ENCODE measurements at regions of chr2 and their contacts with region 1.

Region 1: DNA sequence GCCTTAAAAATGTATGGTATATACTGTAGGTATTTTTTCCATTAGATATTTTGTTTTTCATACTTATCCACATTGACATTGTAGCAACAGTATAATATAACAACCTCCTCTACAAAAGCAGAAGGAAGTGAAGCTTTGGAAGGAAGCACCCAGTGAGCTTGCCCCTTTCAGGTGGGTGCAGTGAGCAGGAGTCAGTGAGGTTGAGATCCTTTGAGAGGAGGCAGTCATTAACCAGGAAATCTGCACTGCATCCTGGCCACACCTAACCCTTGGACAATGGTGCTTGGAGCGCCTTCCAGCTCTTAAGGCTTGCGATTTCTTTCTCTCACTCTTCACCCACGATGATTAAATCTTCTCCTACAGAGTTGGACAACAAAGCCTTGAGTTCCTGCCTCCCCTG is 13.9 kb downstream of the IL37 start:
- DNase-seq: no peak
- H3K4me3 ChIP-seq: no peak overlapping the region
- H3K27ac ChIP-seq: no peak overlapping the region
- H3K4me1 ChIP-seq: no peaks in the 10 kb centered on the region
- H3K27me3 ChIP-seq: peaks cover 26% of the 10 kb centered on the region; the same call in 1 of the 2 replicates
- CTCF ChIP-seq: no peak
- EP300 ChIP-seq: no peak
- RAD21 ChIP-seq: no peak

Region 2: DNA sequence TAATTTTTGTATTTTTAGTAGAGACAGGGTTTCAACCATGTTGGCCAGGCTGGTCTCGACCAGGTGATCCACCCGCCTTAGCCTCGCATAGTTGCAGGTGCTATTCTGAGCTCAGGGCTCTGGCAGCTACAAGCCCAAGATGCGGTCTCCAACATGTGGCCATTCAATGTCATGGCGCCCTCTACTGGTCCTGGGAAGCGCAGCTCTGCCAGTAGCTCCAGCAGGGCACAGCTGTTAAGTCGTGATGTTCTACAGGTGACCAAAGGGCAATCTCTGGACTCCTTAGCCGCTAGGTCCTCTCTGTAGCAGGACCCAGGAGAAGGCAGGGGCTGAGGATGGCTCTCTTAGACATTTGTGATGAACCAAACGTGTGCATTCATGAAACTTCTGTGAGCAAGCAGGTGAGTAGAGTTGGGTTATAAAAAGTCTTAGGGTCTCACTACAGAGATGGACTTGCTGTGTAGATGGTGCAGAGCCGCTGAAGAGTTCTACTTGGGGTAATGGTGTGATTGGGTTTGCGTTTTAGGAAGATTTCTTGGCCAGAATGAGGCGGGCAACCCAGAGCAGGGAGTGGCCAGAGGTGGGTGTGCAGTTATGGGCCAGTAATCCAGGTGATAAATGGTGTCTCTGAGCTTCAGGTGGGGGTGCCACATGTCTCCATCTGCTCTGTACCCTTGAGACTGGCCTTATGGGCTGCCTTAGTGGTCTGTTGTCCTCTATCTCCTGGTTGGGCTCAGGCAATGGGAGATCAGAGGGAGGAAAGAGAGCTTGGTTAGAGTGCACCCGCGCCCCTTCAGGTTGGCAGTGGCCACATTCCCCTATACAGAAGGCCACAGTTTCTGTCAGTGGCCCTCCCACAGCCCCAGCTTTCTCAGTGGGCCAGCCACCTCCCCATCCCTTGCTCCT is 17.2 kb after region 1 on chr2:
- CTCF ChIA-PET with region 1: interaction called, 16 read pairs
- POLR2A ChIA-PET with region 1: no interaction called
- DNase-seq: peak; percentile 53
- H3K4me3 ChIP-seq: peak overlapping the region in 1 of 2 experiments; percentile 17; a peak in 1 of 4 replicates
- H3K27ac ChIP-seq: no peak overlapping the region
- H3K4me1 ChIP-seq: no peaks in the 10 kb centered on the region; a peak in 1 of 4 replicates
- H3K27me3 ChIP-seq: peaks cover 5% of the 10 kb centered on the region; the same call in 1 of the 2 replicates
- CTCF ChIP-seq: peak; percentile 88
- EP300 ChIP-seq: no peak
- RAD21 ChIP-seq: peak; percentile 82